ENCODE measurements at regions of chr2 and their contacts with region 1.

Region 1: DNA sequence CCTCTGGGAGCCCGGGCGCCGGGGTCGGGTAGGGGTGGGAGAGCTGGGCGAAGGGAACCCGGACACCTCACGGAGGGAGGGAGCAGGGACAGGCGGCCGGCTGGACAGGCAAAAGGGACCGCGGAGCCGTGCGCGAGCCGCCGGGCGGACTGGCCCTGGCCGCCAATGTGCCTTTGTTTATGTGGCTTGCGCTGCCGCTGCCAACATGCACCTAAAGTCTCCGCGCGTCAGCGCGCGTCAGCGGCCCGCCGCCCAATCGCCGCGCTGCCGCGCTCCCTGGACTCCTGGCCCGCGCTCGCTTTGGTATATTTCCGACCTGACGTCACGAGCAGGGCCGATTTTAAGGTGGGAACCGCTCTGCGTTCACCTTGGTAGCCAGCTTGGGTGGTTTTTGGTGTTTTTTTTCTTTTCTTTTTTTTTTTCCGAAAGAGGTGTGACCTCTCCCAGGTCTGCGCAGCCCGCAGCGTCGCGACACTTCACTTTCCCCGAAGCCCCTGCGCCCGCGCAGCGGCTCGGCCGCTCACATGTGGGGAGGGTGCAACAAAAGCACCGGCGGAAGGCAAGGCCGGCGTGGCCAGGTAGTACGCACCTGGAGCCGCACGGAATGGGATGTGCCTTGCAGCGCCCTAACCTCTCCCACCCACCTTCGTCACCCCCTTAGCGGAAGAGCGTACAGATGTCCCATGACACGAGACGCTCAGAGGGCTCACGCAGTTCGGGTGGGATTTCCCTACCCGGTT is at the start of gene NR4A2:
- DNase-seq: no peak
- ATAC-seq: peak; percentile 76
- H3K4me3 ChIP-seq: peak within 1 kb of the TSS; percentile 80
- H3K27ac ChIP-seq: peak within 1 kb of the TSS; percentile 85; the same call in 1 of the 2 replicates
- H3K4me1 ChIP-seq: peaks cover 10% of the 10 kb centered on the region
- H3K27me3 ChIP-seq: peaks cover 2 to 13% of the 10 kb centered on the region in 2 experiments
- CTCF ChIP-seq: no peak
- EP300 ChIP-seq: peak; percentile 8 to 49; a peak in 2 of 4 replicates
- POLR2A ChIP-seq: peak; percentile 60
- RAD21 ChIP-seq: no peak
- polyA plus RNA-seq, gene NR4A2: 0.40 to 0.42 TPM

Region 2: GRCh38 chr2:155377266-155377680 is 955.4 kb before region 1 on chr2:
- CTCF ChIA-PET with region 1: interaction called, 6 read pairs
- POLR2A ChIA-PET with region 1: no interaction called
- RAD21 ChIA-PET with region 1: interaction called, 13 read pairs
- SMC1A ChIA-PET with region 1: interaction called, 4 read pairs
- in situ Hi-C with region 1: no loop called
- intact Hi-C with region 1: loop called (anchors 10 kb)
- DNase-seq: no peak
- ATAC-seq: peak; percentile 73
- H3K4me3 ChIP-seq: no peak overlapping the region
- H3K27ac ChIP-seq: no peak overlapping the region
- H3K4me1 ChIP-seq: no peaks in the 10 kb centered on the region
- H3K27me3 ChIP-seq: no peaks in the 10 kb centered on the region
- CTCF ChIP-seq: peak in 2 of 3 experiments; percentile 10 to 17; a peak in 3 of 6 replicates
- EP300 ChIP-seq: no peak
- POLR2A ChIP-seq: no peak
- RAD21 ChIP-seq: peak; percentile 50

Region 3: GRCh38 chr2:156021146-156022035 is 311.3 kb before region 1 on chr2:
- CTCF ChIA-PET with region 1: no interaction called
- POLR2A ChIA-PET with region 1: no interaction called
- RAD21 ChIA-PET with region 1: no interaction called
- SMC1A ChIA-PET with region 1: no interaction called
- in situ Hi-C with region 1: no loop called
- intact Hi-C with region 1: no loop called
- DNase-seq: no peak
- ATAC-seq: no peak
- H3K4me3 ChIP-seq: no peak overlapping the region
- H3K27ac ChIP-seq: no peak overlapping the region
- H3K4me1 ChIP-seq: no peaks in the 10 kb centered on the region
- H3K27me3 ChIP-seq: no peaks in the 10 kb centered on the region
- CTCF ChIP-seq: no peak
- EP300 ChIP-seq: no peak
- POLR2A ChIP-seq: no peak
- RAD21 ChIP-seq: no peak

Region 4: DNA sequence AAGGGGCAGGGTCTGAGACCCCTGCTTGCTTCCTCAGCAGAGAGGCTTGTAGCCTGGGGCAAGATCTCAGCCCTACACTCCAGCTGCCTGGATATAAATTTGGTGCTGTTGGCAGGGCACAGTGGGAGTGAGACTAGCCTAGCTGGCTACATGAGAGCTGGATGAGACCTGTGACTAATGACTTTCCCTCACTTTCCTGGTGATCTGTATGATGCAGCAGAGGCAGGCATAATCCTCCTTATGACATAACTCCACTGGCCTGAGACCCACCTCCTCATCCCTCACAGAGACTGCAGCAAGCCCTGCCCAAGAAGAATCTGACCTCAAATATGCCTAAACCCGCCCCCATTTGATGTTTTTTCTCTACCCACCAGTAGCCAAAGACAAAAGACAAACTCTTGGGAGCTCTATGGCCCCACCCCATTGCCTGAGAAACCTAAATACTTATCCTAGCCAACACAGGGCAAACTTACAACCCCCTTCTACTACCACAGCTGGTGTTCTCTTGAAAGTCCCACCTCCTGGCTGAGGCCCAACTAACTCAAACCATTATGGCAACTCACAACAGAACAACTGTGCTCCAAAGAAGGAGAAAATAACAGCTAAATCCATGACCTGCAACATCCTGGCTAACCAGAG is 102.9 kb before region 1 on chr2:
- CTCF ChIA-PET with region 1: no interaction called
- POLR2A ChIA-PET with region 1: no interaction called
- RAD21 ChIA-PET with region 1: no interaction called
- SMC1A ChIA-PET with region 1: no interaction called
- in situ Hi-C with region 1: no loop called
- intact Hi-C with region 1: no loop called
- DNase-seq: no peak
- ATAC-seq: no peak
- H3K4me3 ChIP-seq: no peak overlapping the region
- H3K27ac ChIP-seq: no peak overlapping the region
- H3K4me1 ChIP-seq: no peaks in the 10 kb centered on the region
- H3K27me3 ChIP-seq: no peaks in the 10 kb centered on the region
- CTCF ChIP-seq: no peak
- EP300 ChIP-seq: no peak
- POLR2A ChIP-seq: no peak
- RAD21 ChIP-seq: no peak

Region 5: GRCh38 chr2:156430236-156430979 is 97.7 kb after region 1 on chr2:
- CTCF ChIA-PET with region 1: interaction called, 25 read pairs
- POLR2A ChIA-PET with region 1: interaction called, 20 read pairs
- RAD21 ChIA-PET with region 1: interaction called, 37 read pairs
- SMC1A ChIA-PET with region 1: interaction called, 36 read pairs
- in situ Hi-C with region 1: no loop called
- intact Hi-C with region 1: loop called (anchors 1 kb)
- DNase-seq: no peak
- ATAC-seq: peak; percentile 48
- H3K4me3 ChIP-seq: no peak overlapping the region; the same call in 1 of the 2 replicates
- H3K27ac ChIP-seq: peak overlapping the region; percentile 83
- H3K4me1 ChIP-seq: peaks cover 28% of the 10 kb centered on the region
- H3K27me3 ChIP-seq: no peaks in the 10 kb centered on the region
- CTCF ChIP-seq: no peak
- EP300 ChIP-seq: no peak
- POLR2A ChIP-seq: no peak
- RAD21 ChIP-seq: no peak

Region 6: DNA sequence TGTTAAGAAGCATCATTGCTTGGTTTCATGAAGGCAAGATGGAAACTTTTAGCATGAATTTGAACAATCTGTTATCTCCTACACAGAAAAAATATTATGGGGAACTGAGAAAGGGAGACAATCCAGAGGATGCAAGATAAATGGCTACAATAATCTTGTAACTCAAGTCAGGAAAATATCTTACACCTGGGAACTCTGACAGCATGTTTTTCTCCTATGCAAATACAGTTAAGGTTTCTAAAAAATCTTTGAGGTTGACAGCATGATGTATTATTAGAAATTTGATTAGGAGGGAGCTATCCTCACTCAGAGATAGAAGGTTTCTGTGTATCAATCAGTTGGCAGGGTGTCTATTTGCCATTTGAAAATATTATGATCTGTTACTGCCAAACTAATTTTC is 179.1 kb after region 1 on chr2:
- CTCF ChIA-PET with region 1: interaction called, 6 read pairs
- POLR2A ChIA-PET with region 1: interaction called, 6 read pairs
- RAD21 ChIA-PET with region 1: interaction called, 13 read pairs
- SMC1A ChIA-PET with region 1: interaction called, 9 read pairs
- in situ Hi-C with region 1: no loop called
- intact Hi-C with region 1: no loop called
- DNase-seq: no peak
- ATAC-seq: peak; percentile 79
- H3K4me3 ChIP-seq: no peak overlapping the region
- H3K27ac ChIP-seq: peak overlapping the region; percentile 45; the same call in 1 of the 2 replicates
- H3K4me1 ChIP-seq: peaks cover 23% of the 10 kb centered on the region
- H3K27me3 ChIP-seq: no peaks in the 10 kb centered on the region
- CTCF ChIP-seq: no peak
- EP300 ChIP-seq: 0 out of 4 replicates have a peak, but pooled peaks have one; percentile 13 to 34
- POLR2A ChIP-seq: no peak
- RAD21 ChIP-seq: no peak

Region 7: GRCh38 chr2:156565066-156565710 is 232.5 kb after region 1 on chr2:
- CTCF ChIA-PET with region 1: interaction called, 5 read pairs
- POLR2A ChIA-PET with region 1: interaction called, 3 read pairs
- RAD21 ChIA-PET with region 1: interaction called, 8 read pairs
- SMC1A ChIA-PET with region 1: interaction called, 21 read pairs
- in situ Hi-C with region 1: no loop called
- intact Hi-C with region 1: no loop called
- DNase-seq: no peak
- ATAC-seq: peak; percentile 68
- H3K4me3 ChIP-seq: no peak overlapping the region
- H3K27ac ChIP-seq: no peak overlapping the region
- H3K4me1 ChIP-seq: no peaks in the 10 kb centered on the region
- H3K27me3 ChIP-seq: no peaks in the 10 kb centered on the region
- CTCF ChIP-seq: no peak
- EP300 ChIP-seq: no peak
- POLR2A ChIP-seq: no peak
- RAD21 ChIP-seq: no peak

Region 8: GRCh38 chr2:156892467-156893281 is 560.0 kb after region 1 on chr2:
- CTCF ChIA-PET with region 1: no interaction called
- POLR2A ChIA-PET with region 1: no interaction called
- RAD21 ChIA-PET with region 1: no interaction called
- SMC1A ChIA-PET with region 1: no interaction called
- in situ Hi-C with region 1: no loop called
- intact Hi-C with region 1: loop called (anchors 10 kb)
- DNase-seq: peak; percentile 7
- ATAC-seq: peak; percentile 78
- H3K4me3 ChIP-seq: no peak overlapping the region
- H3K27ac ChIP-seq: no peak overlapping the region
- H3K4me1 ChIP-seq: peaks cover 6% of the 10 kb centered on the region; the same call in 1 of the 2 replicates
- H3K27me3 ChIP-seq: peaks cover 0 to 11% of the 10 kb centered on the region in 2 experiments; a peak in 1 of 4 replicates
- CTCF ChIP-seq: peak; percentile 45 to 57 (median 46); a peak in 5 of 6 replicates
- EP300 ChIP-seq: no peak
- POLR2A ChIP-seq: no peak
- RAD21 ChIP-seq: peak; percentile 66